ENCODE measurements at regions of chr3 and their contacts with region 1.

Region 1: GRCh38 chr3:170811928-170812591 is 57.9 kb downstream of the RPL22L1 start:
- DNase-seq: peak; percentile 78
- ATAC-seq: peak; percentile 73
- H3K4me3 ChIP-seq: no peak overlapping the region
- H3K27ac ChIP-seq: no peak overlapping the region
- H3K4me1 ChIP-seq: peaks cover 8 to 24% of the 10 kb centered on the region in 2 experiments; a peak in 3 of 4 replicates
- H3K27me3 ChIP-seq: no peaks in the 10 kb centered on the region
- CTCF ChIP-seq: peak; percentile 85 to 98 (median 86)
- POLR2A ChIP-seq: no peak
- RAD21 ChIP-seq: peak; percentile 91

Region 2: DNA sequence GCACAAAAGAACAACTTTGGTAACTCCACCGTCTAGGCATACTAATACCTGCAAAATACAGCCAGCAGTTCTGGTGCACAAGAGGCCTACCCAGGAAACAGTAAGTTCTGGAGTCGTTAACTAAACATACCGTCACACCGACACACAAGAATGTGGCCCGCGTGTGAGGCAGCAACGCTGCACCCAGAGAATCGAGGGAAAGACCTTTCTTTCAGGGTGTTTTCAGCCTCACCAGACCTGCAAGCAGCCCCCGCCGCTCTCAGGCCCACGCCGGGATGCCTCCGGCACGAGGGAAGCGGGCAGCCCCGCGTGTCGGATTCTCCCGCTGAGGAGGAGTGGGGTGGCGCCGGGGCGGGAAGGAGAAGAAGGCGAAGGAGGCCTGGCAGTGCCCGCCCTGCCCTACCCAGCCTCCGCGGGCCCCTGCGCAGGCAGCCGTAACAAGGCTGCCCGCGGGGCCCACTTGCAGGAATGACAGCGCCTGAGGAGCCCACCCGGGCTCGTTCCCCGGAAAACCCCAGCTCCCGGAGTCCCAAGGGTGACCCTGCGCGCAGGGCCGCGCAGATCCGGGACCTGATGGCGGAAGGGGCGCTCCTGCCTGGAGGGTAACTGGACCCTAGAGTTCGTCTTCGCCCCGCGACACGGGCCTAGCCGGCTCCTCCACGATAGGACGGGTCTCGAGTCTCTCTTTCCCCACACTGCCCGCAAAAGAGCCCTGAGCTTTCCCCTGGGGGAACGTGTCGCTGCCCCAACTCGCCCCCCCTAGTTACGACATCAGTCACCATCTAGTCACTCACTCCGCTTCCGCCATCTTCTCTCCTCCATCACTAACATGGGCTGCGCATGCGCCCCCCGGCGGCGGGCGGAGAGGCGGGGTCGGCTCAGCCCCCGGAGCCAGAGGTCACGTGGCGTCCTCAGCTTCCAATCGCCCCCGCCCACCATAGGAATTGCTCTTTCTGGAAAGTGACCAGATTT is 630.9 kb before region 1 on chr3 and contains the start of gene PHC3:
- CTCF ChIA-PET with region 1: no interaction called
- POLR2A ChIA-PET with region 1: no interaction called
- RAD21 ChIA-PET with region 1: no interaction called
- intact Hi-C with region 1: loop called (anchors 10 kb)
- DNase-seq: peak; percentile 75
- ATAC-seq: peak; percentile 89
- H3K4me3 ChIP-seq: peak within 1 kb of the TSS; percentile 88 to 94
- H3K27ac ChIP-seq: peak within 1 kb of the TSS; percentile 57
- H3K4me1 ChIP-seq: peaks cover 8 to 19% of the 10 kb centered on the region in 2 experiments
- H3K27me3 ChIP-seq: no peaks in the 10 kb centered on the region
- CTCF ChIP-seq: no peak
- POLR2A ChIP-seq: peak; percentile 47
- RAD21 ChIP-seq: no peak
- total RNA-seq, gene PHC3: 40.1 TPM

Region 3: DNA sequence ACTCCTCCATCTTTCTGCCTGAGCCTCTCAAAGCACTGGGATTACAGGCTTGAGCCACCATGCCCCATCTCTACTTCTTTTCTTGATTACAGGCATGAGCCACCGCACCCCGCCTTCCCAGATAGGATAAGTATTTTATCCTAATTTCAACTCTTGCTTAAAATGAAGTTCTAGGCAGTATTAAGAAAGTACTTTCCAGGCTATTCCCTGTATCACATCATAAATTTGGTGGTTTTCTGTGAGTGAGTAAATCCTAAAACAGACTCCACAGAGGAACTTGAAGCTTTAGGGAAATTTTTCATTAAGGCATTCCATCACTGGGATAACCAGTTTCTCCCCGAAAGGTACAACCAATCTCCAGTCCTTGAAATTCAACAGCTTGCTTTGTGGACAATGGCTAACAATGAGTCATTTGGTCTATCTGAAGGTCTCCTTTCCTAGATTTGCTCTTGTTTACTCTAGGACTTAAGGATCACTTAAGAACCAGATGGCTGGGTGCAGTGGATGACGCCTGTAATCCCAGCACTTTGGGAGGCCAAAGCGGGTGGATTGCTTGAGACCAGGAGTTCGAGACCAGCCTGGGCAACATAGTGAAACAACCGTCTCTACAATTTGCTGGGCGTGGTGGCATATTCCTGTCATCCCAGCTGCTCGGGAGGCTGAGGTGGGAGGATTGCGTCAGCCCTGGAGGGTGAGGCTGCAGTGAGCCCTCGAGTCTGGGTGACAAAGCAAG is 504.2 kb before region 1 on chr3:
- CTCF ChIA-PET with region 1: no interaction called
- POLR2A ChIA-PET with region 1: no interaction called
- RAD21 ChIA-PET with region 1: no interaction called
- intact Hi-C with region 1: loop called (anchors 1 kb)
- DNase-seq: no peak
- ATAC-seq: no peak
- H3K4me3 ChIP-seq: no peak overlapping the region
- H3K27ac ChIP-seq: no peak overlapping the region
- H3K4me1 ChIP-seq: no peaks in the 10 kb centered on the region
- H3K27me3 ChIP-seq: no peaks in the 10 kb centered on the region
- CTCF ChIP-seq: no peak
- POLR2A ChIP-seq: no peak
- RAD21 ChIP-seq: no peak

Region 4: DNA sequence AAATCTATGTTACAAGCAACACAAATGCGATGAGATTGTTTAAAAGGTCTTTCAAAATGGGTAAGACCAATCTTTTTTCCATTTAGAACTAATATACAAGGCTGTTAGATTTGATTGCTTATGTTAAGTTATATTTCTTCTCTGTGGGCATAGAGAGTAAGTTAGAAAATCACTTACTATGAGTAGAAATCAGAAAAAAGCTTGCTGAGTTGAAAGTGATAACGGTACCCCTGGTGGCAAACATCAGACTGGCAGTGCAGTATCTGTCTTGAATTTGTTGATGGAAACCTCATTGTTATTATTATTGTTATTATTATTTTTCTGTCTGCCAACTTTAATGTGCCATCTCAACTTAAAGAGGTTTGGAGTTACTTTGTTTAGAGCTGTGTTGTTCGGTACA is 381.0 kb before region 1 on chr3:
- CTCF ChIA-PET with region 1: interaction called, 11 read pairs
- POLR2A ChIA-PET with region 1: no interaction called
- RAD21 ChIA-PET with region 1: no interaction called
- intact Hi-C with region 1: no loop called
- DNase-seq: no peak
- ATAC-seq: no peak
- H3K4me3 ChIP-seq: no peak overlapping the region
- H3K27ac ChIP-seq: no peak overlapping the region
- H3K4me1 ChIP-seq: peaks cover 7 to 13% of the 10 kb centered on the region in 2 experiments; a peak in 3 of 4 replicates
- H3K27me3 ChIP-seq: 0 out of 2 replicates have a peak, but pooled peaks cover 7% of the 10 kb centered on the region
- CTCF ChIP-seq: peak in 2 of 3 experiments; percentile 28 to 42; a peak in 3 of 6 replicates
- POLR2A ChIP-seq: no peak
- RAD21 ChIP-seq: no peak

Region 5: GRCh38 chr3:170499565-170500156 is 312.4 kb before region 1 on chr3:
- CTCF ChIA-PET with region 1: interaction called, 12 read pairs
- POLR2A ChIA-PET with region 1: no interaction called
- RAD21 ChIA-PET with region 1: no interaction called
- intact Hi-C with region 1: no loop called
- DNase-seq: peak; percentile 16
- ATAC-seq: peak; percentile 96
- H3K4me3 ChIP-seq: no peak overlapping the region
- H3K27ac ChIP-seq: no peak overlapping the region
- H3K4me1 ChIP-seq: no peaks in the 10 kb centered on the region
- H3K27me3 ChIP-seq: no peaks in the 10 kb centered on the region
- CTCF ChIP-seq: peak; percentile 39 to 82 (median 69); a peak in 5 of 6 replicates
- POLR2A ChIP-seq: no peak
- RAD21 ChIP-seq: peak; percentile 55

Region 6: GRCh38 chr3:170689893-170690660 is 122.0 kb before region 1 on chr3:
- CTCF ChIA-PET with region 1: interaction called, 3 read pairs
- POLR2A ChIA-PET with region 1: no interaction called
- RAD21 ChIA-PET with region 1: interaction called, 3 read pairs
- intact Hi-C with region 1: loop called (anchors 2 kb)
- DNase-seq: peak; percentile 34
- ATAC-seq: peak; percentile 94
- H3K4me3 ChIP-seq: no peak overlapping the region
- H3K27ac ChIP-seq: no peak overlapping the region; the same call in 1 of the 2 replicates
- H3K4me1 ChIP-seq: peaks cover 11 to 18% of the 10 kb centered on the region in 2 experiments
- H3K27me3 ChIP-seq: no peaks in the 10 kb centered on the region
- CTCF ChIP-seq: peak; percentile 58 to 94 (median 78); a peak in 5 of 6 replicates
- POLR2A ChIP-seq: no peak
- RAD21 ChIP-seq: peak; percentile 75

Region 7: GRCh38 chr3:170848292-170848917 is 36.3 kb after region 1 on chr3:
- CTCF ChIA-PET with region 1: interaction called, 11 read pairs
- POLR2A ChIA-PET with region 1: no interaction called
- RAD21 ChIA-PET with region 1: no interaction called
- intact Hi-C with region 1: no loop called
- DNase-seq: no peak
- ATAC-seq: peak; percentile 61
- H3K4me3 ChIP-seq: no peak overlapping the region
- H3K27ac ChIP-seq: no peak overlapping the region
- H3K4me1 ChIP-seq: no peaks in the 10 kb centered on the region
- H3K27me3 ChIP-seq: no peaks in the 10 kb centered on the region
- CTCF ChIP-seq: peak; percentile 17 to 65 (median 46); a peak in 3 of 6 replicates
- POLR2A ChIP-seq: no peak
- RAD21 ChIP-seq: peak; percentile 64

Measured in HCT116 (cell line).